Heart right ventricle (tissue), 16 donors: ENCODE measurements at regions of chr5 and their contacts with region 1.

Region 1: GRCh38 chr5:67246108-67246507 is 49.5 kb upstream of the CD180 start:
- DNase-seq: peak in 1 of 2 donors; percentile 50
- ATAC-seq: peak in 6 of 8 donors; percentile 36 to 72 (median 54)
- H3K4me3 ChIP-seq: no peak overlapping the region
- H3K27ac ChIP-seq: no peak overlapping the region
- H3K4me1 ChIP-seq: peaks cover 0 to 43% (median 25%) of the 10 kb centered on the region in 9 donors
- H3K27me3 ChIP-seq: no peaks in the 10 kb centered on the region
- CTCF ChIP-seq: peak; percentile 67 to 85 (median 77)

Region 2: GRCh38 chr5:67038817-67039603 is 207.1 kb before region 1 on chr5:
- intact Hi-C with region 1: no loop called
- DNase-seq: no peak
- ATAC-seq: peak in 7 of 8 donors; percentile 16 to 82 (median 55)
- H3K4me3 ChIP-seq: no peak overlapping the region
- H3K27ac ChIP-seq: peak overlapping the region; percentile 7 to 71 (median 61)
- H3K4me1 ChIP-seq: peaks cover 9 to 97% (median 85%) of the 10 kb centered on the region in 9 donors
- H3K27me3 ChIP-seq: no peaks in the 10 kb centered on the region
- CTCF ChIP-seq: no peak

Region 3: GRCh38 chr5:67636091-67636490 is 390.0 kb after region 1 on chr5:
- intact Hi-C with region 1: loop called in 1 of 10 experiments (anchors 10 kb)
- DNase-seq: peak; percentile 48 to 70
- ATAC-seq: peak; percentile 42 to 89 (median 74)
- H3K4me3 ChIP-seq: no peak overlapping the region
- H3K27ac ChIP-seq: peak overlapping the region in 3 of 10 donors; percentile 23 to 47 (median 46)
- H3K4me1 ChIP-seq: peaks cover 0 to 30% (median 13%) of the 10 kb centered on the region in 9 donors
- H3K27me3 ChIP-seq: no peaks in the 10 kb centered on the region
- CTCF ChIP-seq: no peak

Region 4: DNA sequence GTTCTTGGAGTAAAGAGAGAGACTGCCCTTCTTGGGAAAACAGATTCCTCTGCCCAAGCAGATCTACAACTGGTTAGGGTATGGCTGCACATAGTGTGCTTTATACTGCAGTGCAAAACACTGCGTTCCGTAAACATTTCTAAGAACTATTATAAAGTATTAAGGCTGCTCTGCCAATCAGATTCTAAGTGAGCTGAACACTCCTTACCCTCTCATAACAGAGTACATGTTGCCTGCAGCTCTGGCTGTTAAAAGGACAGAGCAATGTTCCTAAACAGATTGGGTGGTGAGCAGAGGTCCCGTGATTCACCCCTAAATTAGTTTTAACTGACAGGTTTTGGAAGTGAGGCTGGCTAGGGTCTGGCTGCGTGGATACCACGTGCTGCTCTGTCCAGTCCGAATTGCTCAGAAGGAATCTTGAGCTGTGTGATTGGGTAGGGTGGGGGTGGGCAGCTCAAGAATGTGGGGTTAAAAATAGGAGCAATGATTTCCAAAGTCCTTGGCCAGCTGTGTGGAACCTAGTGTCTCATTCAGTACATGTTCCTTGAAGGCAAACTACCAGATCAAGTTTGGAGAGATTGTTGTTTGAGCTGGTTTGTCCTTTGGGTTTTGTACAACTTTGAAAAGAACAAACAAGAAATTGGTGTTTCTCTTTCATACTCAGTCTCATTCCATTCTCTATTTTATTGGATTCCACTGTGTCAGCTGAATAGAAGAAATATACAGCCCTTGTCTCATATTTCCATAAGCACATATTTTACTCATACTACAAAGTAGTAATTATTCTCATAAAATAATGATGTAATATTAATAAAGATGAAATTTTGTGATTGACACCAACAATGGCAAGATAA is 448.1 kb after region 1 on chr5:
- intact Hi-C with region 1: loop called in 1 of 10 experiments (anchors 5 kb)
- DNase-seq: peak; percentile 47 to 73
- ATAC-seq: peak; percentile 95 to 99 (median 96)
- H3K4me3 ChIP-seq: no peak overlapping the region
- H3K27ac ChIP-seq: peak overlapping the region in 9 of 10 donors; percentile 21 to 83 (median 74)
- H3K4me1 ChIP-seq: peaks cover 3 to 20% (median 11%) of the 10 kb centered on the region in 9 donors
- H3K27me3 ChIP-seq: no peaks in the 10 kb centered on the region
- CTCF ChIP-seq: no peak

Region 5: DNA sequence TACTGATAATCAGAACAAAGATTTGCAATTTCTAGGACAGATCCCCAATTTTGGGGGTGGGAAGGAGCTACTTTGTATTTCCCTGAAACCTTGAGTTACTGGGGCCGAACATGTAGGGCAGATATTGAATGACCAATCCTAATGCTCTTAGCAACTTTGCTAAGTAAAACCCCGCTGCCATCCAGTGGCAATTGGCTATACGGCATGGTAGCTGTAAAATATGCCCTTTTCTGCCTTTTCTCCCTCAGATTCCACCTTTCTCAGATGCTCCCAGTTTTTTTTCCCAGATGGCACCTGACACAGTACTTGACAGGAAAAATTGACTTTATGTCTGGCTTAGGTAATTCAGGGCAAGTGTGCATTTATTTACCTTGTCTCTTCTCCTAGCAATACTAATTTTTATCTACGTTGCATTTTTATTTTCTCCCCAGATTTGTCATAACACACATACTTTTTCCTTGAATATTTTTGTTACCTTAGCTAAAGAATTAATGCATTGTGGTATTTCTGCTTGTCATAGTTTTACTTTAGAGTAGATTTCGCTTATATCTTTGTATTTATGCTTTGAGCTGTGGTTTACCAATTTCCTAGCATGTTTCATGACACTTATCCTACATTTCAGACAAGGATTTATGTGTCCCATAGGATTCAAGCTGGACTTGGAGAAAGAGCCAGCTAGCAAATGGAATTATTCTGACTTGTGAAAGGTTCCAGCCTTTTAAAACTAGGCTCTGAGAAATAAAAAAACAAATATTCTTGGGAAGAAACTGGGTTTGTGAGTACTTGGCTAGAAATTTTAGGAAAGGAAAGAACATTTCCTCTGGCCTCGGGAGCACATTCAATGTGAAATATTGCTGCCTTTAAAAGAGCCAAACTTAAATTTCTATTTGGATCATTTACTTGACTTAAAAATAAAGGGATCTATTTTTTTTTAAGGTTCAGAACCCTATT is 1006.8 kb after region 1 on chr5:
- intact Hi-C with region 1: loop called (anchors 2 to 10 kb)
- DNase-seq: peak in 1 of 2 donors; percentile 66
- ATAC-seq: peak; percentile 60 to 82 (median 70)
- H3K4me3 ChIP-seq: peak overlapping the region in 3 of 10 donors; percentile 1 to 12 (median 10)
- H3K27ac ChIP-seq: peak overlapping the region; percentile 11 to 86 (median 69)
- H3K4me1 ChIP-seq: peaks cover 28 to 100% (median 96%) of the 10 kb centered on the region in 9 donors
- H3K27me3 ChIP-seq: no peaks in the 10 kb centered on the region
- CTCF ChIP-seq: peak; percentile 47 to 86 (median 77)

Region 6: DNA sequence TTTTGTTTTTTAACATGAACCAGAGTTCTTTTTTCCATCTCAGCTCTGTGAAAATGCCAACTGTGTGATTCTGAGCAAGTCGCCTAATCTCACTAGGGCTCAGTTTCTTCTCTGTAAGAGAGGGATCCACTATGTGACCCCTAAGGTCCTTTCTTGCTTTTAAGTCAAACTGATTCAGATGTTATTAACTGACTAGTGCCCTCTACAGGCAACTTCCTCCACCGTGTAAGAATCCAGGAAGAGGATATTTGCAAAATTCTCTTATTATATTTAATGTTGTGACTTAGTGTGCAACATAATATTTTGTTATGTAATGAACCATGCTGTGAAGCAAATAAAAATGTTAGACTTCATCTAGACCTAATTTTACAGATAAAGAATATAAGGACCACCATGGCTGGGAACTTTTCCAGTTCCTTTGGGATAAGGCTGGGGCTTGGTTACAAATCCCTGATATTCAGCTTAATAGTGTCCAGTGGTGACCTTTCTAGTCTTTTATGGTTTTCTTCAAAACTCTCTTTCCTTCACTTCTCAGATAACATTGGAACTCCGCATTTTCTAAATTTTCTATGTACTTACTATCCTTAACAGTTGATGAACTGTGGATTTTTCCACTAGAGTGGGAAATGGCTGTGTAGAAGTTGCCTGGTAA is 1214.2 kb after region 1 on chr5:
- intact Hi-C with region 1: loop called in 5 of 10 experiments (anchors 10 kb)
- DNase-seq: peak in 1 of 2 donors; percentile 57
- ATAC-seq: peak in 5 of 8 donors; percentile 42 to 71 (median 59)
- H3K4me3 ChIP-seq: no peak overlapping the region
- H3K27ac ChIP-seq: peak overlapping the region in 1 of 10 donors; percentile 11
- H3K4me1 ChIP-seq: peaks cover 0 to 29% (median 8%) of the 10 kb centered on the region in 9 donors
- H3K27me3 ChIP-seq: no peaks in the 10 kb centered on the region
- CTCF ChIP-seq: peak; percentile 46 to 90 (median 78)